ENCODE measurements at regions of chr6 and their contacts with region 1.

Region 1: DNA sequence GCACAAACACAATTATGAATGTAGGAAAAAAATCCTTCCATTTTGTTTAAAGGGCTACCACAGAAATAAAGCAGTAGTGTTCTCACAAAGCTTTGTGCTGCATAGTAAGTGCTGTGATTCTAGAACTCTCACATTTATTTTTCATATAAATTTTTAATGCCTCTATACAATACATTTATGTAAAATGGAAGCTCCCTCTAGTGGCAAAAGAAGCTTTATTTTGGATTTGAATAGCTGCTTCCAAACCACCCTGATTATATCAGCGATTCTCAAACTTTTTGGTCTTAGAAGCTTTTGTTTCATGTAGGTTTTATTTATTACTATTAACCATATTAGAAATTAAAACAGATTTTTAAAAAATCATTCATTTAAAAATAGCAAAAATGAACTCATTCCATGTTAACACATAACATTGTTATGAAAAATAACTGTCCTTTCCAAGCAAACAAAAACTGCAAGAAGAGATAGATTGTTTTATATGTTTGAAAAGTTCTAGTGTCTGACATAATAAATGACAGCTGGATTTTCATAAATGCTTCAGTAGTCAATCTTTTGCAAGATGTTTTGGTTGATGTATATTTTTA is 38.4 kb downstream of the HS3ST5 start:
- DNase-seq: no peak
- H3K4me3 Mint-ChIP-seq: no peak overlapping the region
- H3K27ac Mint-ChIP-seq: no peak overlapping the region
- H3K4me1 Mint-ChIP-seq: no peaks in the 10 kb centered on the region
- H3K27me3 Mint-ChIP-seq: peaks cover under 1% of the 10 kb centered on the region

Region 2: GRCh38 chr6:113980937-113981554 is 323.4 kb before region 1 on chr6:
- CTCF ChIA-PET with region 1: no interaction called
- intact Hi-C with region 1: loop called (anchors 5 kb)
- DNase-seq: peak; percentile 17
- H3K4me3 Mint-ChIP-seq: no peak overlapping the region
- H3K27ac Mint-ChIP-seq: no peak overlapping the region
- H3K4me1 Mint-ChIP-seq: no peaks in the 10 kb centered on the region
- H3K27me3 Mint-ChIP-seq: no peaks in the 10 kb centered on the region

Region 3: GRCh38 chr6:113994918-113995342 is 309.5 kb before region 1 on chr6:
- CTCF ChIA-PET with region 1: interaction called, 4 read pairs
- intact Hi-C with region 1: loop called (anchors 1 kb)
- DNase-seq: peak; percentile 40
- H3K4me3 Mint-ChIP-seq: no peak overlapping the region
- H3K27ac Mint-ChIP-seq: no peak overlapping the region
- H3K4me1 Mint-ChIP-seq: no peaks in the 10 kb centered on the region
- H3K27me3 Mint-ChIP-seq: peaks cover 11% of the 10 kb centered on the region

Region 4: GRCh38 chr6:114096561-114097172 is 207.7 kb before region 1 on chr6:
- CTCF ChIA-PET with region 1: interaction called, 3 read pairs
- intact Hi-C with region 1: loop called (anchors 1 kb)
- DNase-seq: peak; percentile 12
- H3K4me3 Mint-ChIP-seq: no peak overlapping the region
- H3K27ac Mint-ChIP-seq: no peak overlapping the region
- H3K4me1 Mint-ChIP-seq: no peaks in the 10 kb centered on the region
- H3K27me3 Mint-ChIP-seq: peaks cover 7% of the 10 kb centered on the region

Region 5: DNA sequence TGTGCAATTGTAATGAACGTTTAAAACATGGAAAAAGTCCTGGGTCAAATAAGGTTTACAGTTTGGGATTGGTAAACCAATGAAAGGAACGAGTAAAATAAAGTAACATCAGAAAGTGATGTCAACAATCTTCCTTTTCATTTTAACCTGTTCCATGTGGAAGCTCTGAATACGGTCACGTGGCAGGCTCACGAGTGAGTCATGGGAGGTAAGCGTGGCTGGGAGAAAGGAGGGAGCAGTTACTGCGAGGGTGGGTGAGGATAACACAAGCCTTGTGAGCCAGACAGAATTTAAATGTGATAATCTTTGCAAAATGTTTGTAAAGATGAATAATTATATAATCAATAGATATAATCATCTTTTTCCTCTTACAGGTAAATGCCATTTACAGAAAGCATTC is 162.1 kb before region 1 on chr6:
- CTCF ChIA-PET with region 1: no interaction called
- intact Hi-C with region 1: no loop called
- DNase-seq: no peak
- H3K4me3 Mint-ChIP-seq: no peak overlapping the region
- H3K27ac Mint-ChIP-seq: no peak overlapping the region
- H3K4me1 Mint-ChIP-seq: no peaks in the 10 kb centered on the region
- H3K27me3 Mint-ChIP-seq: peaks cover 20% of the 10 kb centered on the region

Region 6: DNA sequence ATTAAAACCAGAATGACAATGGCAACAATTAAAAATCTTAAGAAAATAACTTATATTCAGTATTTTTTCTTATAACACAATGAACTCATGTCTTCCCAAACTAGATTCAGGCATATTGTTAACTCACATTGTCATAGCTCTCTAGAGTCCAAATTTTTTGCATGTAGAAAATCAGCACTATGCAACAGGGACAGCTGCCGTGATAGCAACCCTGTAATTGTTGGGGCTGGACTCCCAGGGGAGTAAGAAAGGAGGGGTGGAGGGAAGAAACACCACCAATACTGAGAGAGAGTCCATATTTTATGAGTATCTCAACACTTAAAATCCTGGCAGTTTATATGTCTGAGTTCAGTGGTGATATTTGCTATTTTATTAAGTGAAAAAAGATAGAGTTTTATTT is 128.0 kb after region 1 on chr6:
- CTCF ChIA-PET with region 1: no interaction called
- intact Hi-C with region 1: no loop called
- DNase-seq: no peak
- H3K4me3 Mint-ChIP-seq: no peak overlapping the region
- H3K27ac Mint-ChIP-seq: no peak overlapping the region
- H3K4me1 Mint-ChIP-seq: no peaks in the 10 kb centered on the region
- H3K27me3 Mint-ChIP-seq: no peaks in the 10 kb centered on the region

Region 7: GRCh38 chr6:114690625-114691024 is 386.2 kb after region 1 on chr6:
- CTCF ChIA-PET with region 1: no interaction called
- intact Hi-C with region 1: no loop called
- DNase-seq: no peak
- H3K4me3 Mint-ChIP-seq: no peak overlapping the region
- H3K27ac Mint-ChIP-seq: no peak overlapping the region
- H3K4me1 Mint-ChIP-seq: no peaks in the 10 kb centered on the region
- H3K27me3 Mint-ChIP-seq: no peaks in the 10 kb centered on the region

Measured in activated naive CD4-positive, alpha-beta T cell treated with anti-CD3 and anti-CD28 coated beads for 36 hours (primary cell).